H1 (cell line): ENCODE measurements at regions of chr1 and their contacts with region 1.

Region 1: GRCh38 chr1:176949033-176949662 is 215.4 kb downstream of the ASTN1 start:
- DNase-seq: peak; percentile 80 to 96
- H3K4me3 ChIP-seq: no peak overlapping the region
- H3K27ac ChIP-seq: no peak overlapping the region
- H3K4me1 ChIP-seq: peaks cover 0 to 11% (median 1%) of the 10 kb centered on the region in 4 experiments; a peak in 2 of 7 replicates
- H3K27me3 ChIP-seq: no peaks in the 10 kb centered on the region; a peak in 1 of 7 replicates
- CTCF ChIP-seq: peak; percentile 99
- EP300 ChIP-seq: no peak
- POLR2A ChIP-seq: no peak
- RAD21 ChIP-seq: peak; percentile 77 to 83

Region 2: DNA sequence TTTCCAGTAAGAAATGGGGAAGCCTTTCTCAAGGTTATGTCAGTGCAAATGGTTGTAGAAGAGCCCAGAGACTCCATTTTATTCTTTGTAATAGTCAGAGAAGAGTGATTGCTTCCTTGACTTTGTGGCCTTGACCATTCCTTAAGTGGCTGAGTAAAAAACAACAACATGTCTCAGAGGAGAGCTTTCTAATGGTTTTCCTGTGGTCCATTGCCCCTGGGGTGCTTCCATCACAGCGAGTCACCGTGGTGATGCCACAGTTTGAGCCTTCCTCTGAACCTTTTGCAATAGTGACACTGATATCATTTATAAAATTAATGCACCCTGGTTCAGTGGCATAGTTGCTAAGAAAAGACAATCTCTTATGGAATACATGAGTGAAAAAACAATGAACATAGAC is 447.5 kb before region 1 on chr1:
- CTCF ChIA-PET with region 1: no interaction called
- POLR2A ChIA-PET with region 1: no interaction called
- DNase-seq: no peak
- H3K4me3 ChIP-seq: no peak overlapping the region
- H3K27ac ChIP-seq: no peak overlapping the region
- H3K4me1 ChIP-seq: no peaks in the 10 kb centered on the region
- H3K27me3 ChIP-seq: no peaks in the 10 kb centered on the region
- CTCF ChIP-seq: no peak
- EP300 ChIP-seq: no peak
- POLR2A ChIP-seq: no peak
- RAD21 ChIP-seq: no peak

Region 3: GRCh38 chr1:176926330-176927086 is 22.6 kb before region 1 on chr1:
- CTCF ChIA-PET with region 1: interaction called, 30 read pairs
- POLR2A ChIA-PET with region 1: no interaction called
- DNase-seq: no peak
- H3K4me3 ChIP-seq: no peak overlapping the region
- H3K27ac ChIP-seq: no peak overlapping the region
- H3K4me1 ChIP-seq: no peaks in the 10 kb centered on the region
- H3K27me3 ChIP-seq: no peaks in the 10 kb centered on the region
- CTCF ChIP-seq: no peak
- EP300 ChIP-seq: no peak
- POLR2A ChIP-seq: no peak
- RAD21 ChIP-seq: no peak

Region 4: DNA sequence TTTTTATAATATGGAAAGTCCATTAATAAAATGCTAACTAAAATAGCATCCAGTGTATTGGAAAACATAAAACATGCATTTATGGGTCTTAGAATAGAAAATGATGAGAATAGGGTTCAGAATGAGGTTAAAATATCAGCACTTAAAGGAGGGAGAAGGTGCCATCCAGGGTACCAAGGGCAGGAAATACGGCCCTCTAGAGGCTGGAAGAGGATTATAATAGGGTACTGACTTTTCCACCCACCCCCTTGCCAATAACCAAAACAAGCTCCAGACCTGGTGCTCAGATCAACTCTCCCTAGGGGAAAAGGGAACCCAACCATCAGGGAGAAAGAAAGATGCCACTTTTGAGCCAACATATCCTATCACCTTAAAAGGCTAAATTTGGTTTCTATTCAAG is 188.7 kb after region 1 on chr1:
- CTCF ChIA-PET with region 1: interaction called, 19 read pairs
- POLR2A ChIA-PET with region 1: no interaction called
- DNase-seq: no peak
- H3K4me3 ChIP-seq: no peak overlapping the region
- H3K27ac ChIP-seq: no peak overlapping the region
- H3K4me1 ChIP-seq: peaks cover 0 to 2% (median 1%) of the 10 kb centered on the region in 4 experiments; a peak in 2 of 7 replicates
- H3K27me3 ChIP-seq: no peaks in the 10 kb centered on the region
- CTCF ChIP-seq: peak; percentile 7 to 58 (median 49)
- EP300 ChIP-seq: no peak
- POLR2A ChIP-seq: no peak
- RAD21 ChIP-seq: peak; percentile 49 to 62

Region 5: DNA sequence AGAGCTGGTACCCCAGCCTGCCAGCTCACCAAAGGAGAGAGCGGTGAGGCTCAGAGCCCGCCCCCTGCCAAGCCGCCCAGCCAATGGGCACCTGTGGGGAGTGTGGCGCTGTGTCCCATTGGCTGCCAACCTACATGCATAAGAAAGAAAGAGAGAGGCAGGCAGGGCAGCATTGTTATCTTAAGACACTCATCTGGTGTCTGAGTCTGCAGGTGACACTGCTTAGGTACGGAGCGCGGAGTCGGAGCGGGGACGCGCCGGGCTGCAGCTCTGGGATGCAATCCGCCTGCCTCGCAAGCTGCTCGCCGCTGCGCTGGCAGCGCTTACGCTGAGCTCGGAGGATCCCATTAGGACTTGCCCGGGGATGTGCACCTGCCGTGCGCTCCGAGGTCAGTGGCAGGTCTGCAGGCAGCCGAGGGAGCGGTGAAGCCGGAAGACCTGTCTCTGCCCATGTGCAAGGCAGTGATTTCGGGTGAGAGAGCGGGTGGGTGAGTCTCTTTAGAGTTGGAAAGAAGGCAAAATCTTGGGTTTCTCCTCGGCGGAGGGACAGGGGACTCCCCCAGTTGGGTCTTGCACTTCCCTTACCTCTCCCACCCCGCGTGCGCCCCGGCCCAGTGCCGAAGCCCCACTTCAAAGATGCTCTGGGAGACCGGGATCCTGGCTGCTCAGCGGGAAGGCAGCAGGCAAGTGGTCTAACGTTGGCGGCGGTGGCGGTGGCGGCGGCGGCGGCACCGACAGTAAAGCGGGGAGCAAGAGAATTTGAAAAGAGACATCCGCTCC is 221.8 kb after region 1 on chr1 and contains the start of gene BRINP2:
- CTCF ChIA-PET with region 1: interaction called, 23 read pairs
- POLR2A ChIA-PET with region 1: no interaction called
- DNase-seq: peak; percentile 46 to 89
- H3K4me3 ChIP-seq: peak within 1 kb of the TSS; percentile 46 to 71 (median 54)
- H3K27ac ChIP-seq: no peak within 1 kb of the TSS
- H3K4me1 ChIP-seq: peaks cover 0 to 4% (median 2%) of the 10 kb centered on the region in 4 experiments; a peak in 5 of 7 replicates
- H3K27me3 ChIP-seq: peaks cover 24 to 61% (median 52%) of the 10 kb centered on the region in 4 experiments
- CTCF ChIP-seq: no peak
- EP300 ChIP-seq: no peak
- POLR2A ChIP-seq: no peak
- RAD21 ChIP-seq: no peak; a peak in 1 of 4 replicates
- total RNA-seq, gene BRINP2: 0.39 and 0.42 TPM in 2 replicates